HEK293 (cell line): ENCODE measurements at regions of chr12 and their contacts with region 1.

Region 1: GRCh38 chr12:65556681-65557437 is 267.4 kb upstream of the HMGA2 start:
- H3K4me3 ChIP-seq: no peak overlapping the region
- H3K27ac ChIP-seq: no peak overlapping the region
- H3K4me1 ChIP-seq: no peaks in the 10 kb centered on the region
- CTCF ChIP-seq: peak; percentile 81

Region 2: GRCh38 chr12:65546528-65546927 is 10.3 kb before region 1 on chr12:
- CTCF ChIA-PET with region 1: interaction called, 36 read pairs
- POLR2A ChIA-PET with region 1: no interaction called
- H3K4me3 ChIP-seq: no peak overlapping the region
- H3K27ac ChIP-seq: no peak overlapping the region
- H3K4me1 ChIP-seq: no peaks in the 10 kb centered on the region
- CTCF ChIP-seq: no peak

Region 3: GRCh38 chr12:65574878-65575277 is 18.0 kb after region 1 on chr12:
- CTCF ChIA-PET with region 1: interaction called, 11 read pairs
- POLR2A ChIA-PET with region 1: no interaction called
- H3K4me3 ChIP-seq: no peak overlapping the region
- H3K27ac ChIP-seq: no peak overlapping the region
- H3K4me1 ChIP-seq: no peaks in the 10 kb centered on the region
- CTCF ChIP-seq: no peak

Region 4: GRCh38 chr12:65740873-65741600 is 184.2 kb after region 1 on chr12:
- CTCF ChIA-PET with region 1: no interaction called
- POLR2A ChIA-PET with region 1: no interaction called
- H3K4me3 ChIP-seq: peak overlapping the region; percentile 64
- H3K27ac ChIP-seq: peak overlapping the region; percentile 71
- H3K4me1 ChIP-seq: 0 out of 2 replicates have a peak, but pooled peaks cover 5% of the 10 kb centered on the region
- CTCF ChIP-seq: no peak

Region 5: GRCh38 chr12:65878544-65878943 is 321.7 kb after region 1 on chr12:
- CTCF ChIA-PET with region 1: interaction called, 15 read pairs
- POLR2A ChIA-PET with region 1: no interaction called
- H3K4me3 ChIP-seq: no peak overlapping the region
- H3K27ac ChIP-seq: no peak overlapping the region
- H3K4me1 ChIP-seq: peaks cover 50% of the 10 kb centered on the region
- CTCF ChIP-seq: peak; percentile 22; the same call in 1 of the 2 replicates